H1 (cell line): ENCODE measurements at regions of chr6 and their contacts with region 1.

Region 1: GRCh38 chr6:41689171-41690008 is 46.0 kb downstream of the TFEB start:
- DNase-seq: no peak
- H3K4me3 ChIP-seq: no peak overlapping the region
- H3K27ac ChIP-seq: no peak overlapping the region
- H3K4me1 ChIP-seq: peaks cover 5 to 16% (median 6%) of the 10 kb centered on the region in 4 experiments; a peak in 6 of 7 replicates
- H3K27me3 ChIP-seq: no peaks in the 10 kb centered on the region; a peak in 1 of 7 replicates
- CTCF ChIP-seq: no peak
- EP300 ChIP-seq: no peak
- POLR2A ChIP-seq: no peak
- RAD21 ChIP-seq: no peak

Region 2: GRCh38 chr6:41675176-41675770 is 14.1 kb before region 1 on chr6:
- CTCF ChIA-PET with region 1: interaction called, 16 read pairs
- POLR2A ChIA-PET with region 1: no interaction called
- DNase-seq: no peak
- H3K4me3 ChIP-seq: no peak overlapping the region
- H3K27ac ChIP-seq: no peak overlapping the region
- H3K4me1 ChIP-seq: peaks cover 0 to 14% (median 10%) of the 10 kb centered on the region in 4 experiments; a peak in 6 of 7 replicates
- H3K27me3 ChIP-seq: peaks cover 0 to 5% (median 3%) of the 10 kb centered on the region in 4 experiments; a peak in 4 of 7 replicates
- CTCF ChIP-seq: no peak
- EP300 ChIP-seq: no peak
- POLR2A ChIP-seq: no peak
- RAD21 ChIP-seq: no peak

Region 3: DNA sequence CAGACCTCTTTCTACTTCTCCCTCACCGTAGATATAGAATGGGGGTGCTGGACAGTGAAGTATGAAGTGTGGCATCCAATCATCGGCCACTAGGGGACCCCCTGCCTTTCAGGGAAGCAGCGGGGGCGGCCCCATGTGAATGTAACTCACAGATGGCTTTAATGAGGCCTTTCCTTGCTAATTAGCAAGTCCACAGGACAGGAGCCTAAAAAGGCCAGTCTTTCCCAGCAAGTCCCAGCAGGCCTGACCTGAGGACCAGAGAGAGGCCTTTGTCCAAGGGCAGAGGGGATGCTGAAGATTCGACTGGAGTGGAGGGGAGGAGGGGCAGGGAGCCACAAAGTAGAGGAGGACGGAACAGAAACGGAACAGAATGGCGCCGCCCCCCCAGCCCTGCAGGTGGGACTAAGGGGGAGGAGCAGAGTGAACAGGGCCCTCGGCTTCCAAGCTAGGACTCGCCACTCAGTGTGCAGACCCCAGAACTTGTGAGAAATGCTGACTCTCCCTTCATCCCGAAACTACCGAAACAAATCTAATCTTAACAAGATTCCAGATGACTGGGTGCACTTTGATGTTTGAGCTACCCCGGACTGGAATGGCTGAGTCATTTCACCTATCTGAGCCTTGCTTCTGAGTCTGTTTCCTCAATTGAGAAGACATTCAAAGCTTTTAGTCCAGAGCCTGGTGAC is 447.3 kb after region 1 on chr6:
- CTCF ChIA-PET with region 1: no interaction called
- POLR2A ChIA-PET with region 1: no interaction called
- DNase-seq: peak; percentile 86 to 92
- H3K4me3 ChIP-seq: peak overlapping the region in 3 of 4 experiments; percentile 6 to 44 (median 8); a peak in 4 of 8 replicates
- H3K27ac ChIP-seq: peak overlapping the region; percentile 88; the same call in 1 of the 2 replicates
- H3K4me1 ChIP-seq: peaks cover 28 to 65% (median 47%) of the 10 kb centered on the region in 4 experiments
- H3K27me3 ChIP-seq: no peaks in the 10 kb centered on the region
- CTCF ChIP-seq: peak in 2 of 3 experiments; percentile 38 to 61; a peak in 3 of 4 replicates
- EP300 ChIP-seq: peak in 1 of 2 experiments; percentile 90; a peak in 1 of 3 replicates
- POLR2A ChIP-seq: peak in 1 of 2 experiments; percentile 39; a peak in 1 of 3 replicates
- RAD21 ChIP-seq: peak; percentile 12 to 33; a peak in 3 of 4 replicates